Posterior vena cava (tissue), 2 donors: ENCODE measurements at regions of chr5 and their contacts with region 1.

Region 1: DNA sequence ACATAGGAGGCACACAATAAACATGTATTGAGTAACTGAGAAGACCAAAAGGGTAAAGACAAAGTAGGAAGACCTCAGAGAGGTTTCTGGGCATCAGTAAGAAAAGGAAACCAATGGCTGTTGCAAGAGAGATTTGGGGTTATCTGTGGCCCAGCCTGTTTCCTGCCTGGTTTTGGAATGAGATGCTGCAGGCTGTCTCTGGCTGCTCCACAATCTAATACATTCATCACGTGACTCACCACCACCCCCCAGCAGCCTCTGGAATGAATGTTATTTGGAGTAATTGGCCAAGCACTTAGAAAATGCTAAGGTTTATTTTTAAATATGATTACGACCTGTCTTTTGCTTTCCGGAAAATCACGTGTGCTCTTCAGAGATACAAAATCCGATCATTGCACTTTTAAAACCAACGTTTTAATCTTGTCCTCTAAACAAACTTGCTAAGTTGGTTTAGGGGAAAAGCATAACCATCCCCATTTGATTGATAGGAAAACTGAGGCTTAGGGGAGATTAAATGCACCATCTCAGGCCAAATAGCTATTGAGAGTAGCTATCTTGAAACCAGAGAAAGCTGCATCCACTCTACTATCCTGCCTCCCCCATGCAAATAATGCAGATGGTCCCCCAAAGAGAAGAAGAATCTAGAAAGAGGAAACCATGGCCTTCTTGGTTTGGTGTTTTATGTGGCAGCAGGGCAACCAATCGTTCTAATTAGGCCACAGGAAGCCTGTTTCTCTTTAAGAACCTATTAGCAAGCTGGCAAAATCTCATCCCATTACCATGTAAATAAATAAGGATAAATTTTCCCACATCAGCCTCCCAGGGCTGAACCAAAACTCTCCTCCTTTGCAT is 151.8 kb upstream of the ADRA1B start:
- DNase-seq: no peak

Region 2: GRCh38 chr5:159915904-159916840 is 151.7 kb after region 1 on chr5 and contains the start of gene ADRA1B:
- intact Hi-C with region 1: loop called in 1 of 2 experiments (anchors 5 kb)
- DNase-seq: peak; percentile 91
- total RNA-seq, gene ADRA1B: 4.2 to 8.0 TPM